ENCODE measurements at regions of chr1 and their contacts with region 1.

Region 1: GRCh38 chr1:186315570-186315969 is 59.5 kb downstream of the TPR start:
- DNase-seq: no peak
- H3K4me3 ChIP-seq: no peak overlapping the region
- H3K27ac ChIP-seq: no peak overlapping the region
- H3K4me1 ChIP-seq: no peaks in the 10 kb centered on the region
- H3K27me3 ChIP-seq: no peaks in the 10 kb centered on the region
- CTCF ChIP-seq: no peak
- POLR2A ChIP-seq: no peak

Region 2: GRCh38 chr1:186112280-186112679 is 203.3 kb before region 1 on chr1:
- intact Hi-C with region 1: no loop called
- DNase-seq: no peak
- H3K4me3 ChIP-seq: no peak overlapping the region
- H3K27ac ChIP-seq: no peak overlapping the region
- H3K4me1 ChIP-seq: no peaks in the 10 kb centered on the region
- H3K27me3 ChIP-seq: no peaks in the 10 kb centered on the region
- CTCF ChIP-seq: no peak
- POLR2A ChIP-seq: no peak

Region 3: GRCh38 chr1:186363891-186364290 is 48.3 kb after region 1 on chr1:
- intact Hi-C with region 1: loop called (anchors 2 kb)
- DNase-seq: no peak
- H3K4me3 ChIP-seq: no peak overlapping the region
- H3K27ac ChIP-seq: no peak overlapping the region
- H3K4me1 ChIP-seq: no peaks in the 10 kb centered on the region
- H3K27me3 ChIP-seq: no peaks in the 10 kb centered on the region
- CTCF ChIP-seq: no peak
- POLR2A ChIP-seq: no peak

Region 4: DNA sequence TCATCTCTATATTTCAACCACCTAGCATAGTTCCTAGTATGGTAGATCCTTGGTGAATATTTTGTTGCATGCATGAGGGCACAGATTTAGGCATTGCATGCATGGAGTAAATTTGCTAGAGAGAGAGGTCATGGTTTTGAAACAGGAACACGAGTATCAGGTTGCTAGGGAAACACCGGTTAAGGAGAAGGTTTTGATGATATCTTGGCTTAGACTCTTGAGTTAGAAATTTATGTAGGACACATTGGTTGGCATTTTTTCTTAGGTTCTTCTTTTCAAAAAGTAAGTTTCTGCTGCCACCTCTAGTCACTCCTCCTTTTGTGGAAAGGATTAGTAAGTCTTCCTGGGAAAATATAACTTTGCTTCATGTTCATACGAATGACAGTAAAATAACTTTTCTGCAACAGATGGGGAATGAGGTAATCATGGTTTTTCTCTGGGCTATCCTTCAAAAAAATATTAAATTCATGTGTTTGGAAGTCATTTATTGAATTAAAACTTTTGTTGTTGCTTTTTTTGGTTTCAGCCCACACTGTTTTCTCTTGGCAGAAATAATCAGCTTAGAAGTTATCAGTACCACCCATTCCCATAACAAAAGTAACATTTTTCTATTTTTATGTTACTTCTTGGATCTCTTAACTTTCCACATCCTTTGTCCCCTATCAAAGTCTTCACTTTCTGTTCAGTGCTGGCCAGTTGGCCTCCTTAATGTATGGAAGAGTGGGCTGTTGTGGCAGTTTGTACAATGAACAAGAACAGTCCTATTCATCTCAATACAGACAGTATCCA is 610.5 kb after region 1 on chr1:
- intact Hi-C with region 1: no loop called
- DNase-seq: no peak
- H3K4me3 ChIP-seq: no peak overlapping the region
- H3K27ac ChIP-seq: peak overlapping the region in 1 of 2 donors; percentile 43
- H3K4me1 ChIP-seq: no peaks in the 10 kb centered on the region
- H3K27me3 ChIP-seq: no peaks in the 10 kb centered on the region
- CTCF ChIP-seq: no peak
- POLR2A ChIP-seq: no peak